Esophagus muscularis mucosa (tissue), 4 donors: ENCODE measurements at regions of chr1 and their contacts with region 1.

Region 1: DNA sequence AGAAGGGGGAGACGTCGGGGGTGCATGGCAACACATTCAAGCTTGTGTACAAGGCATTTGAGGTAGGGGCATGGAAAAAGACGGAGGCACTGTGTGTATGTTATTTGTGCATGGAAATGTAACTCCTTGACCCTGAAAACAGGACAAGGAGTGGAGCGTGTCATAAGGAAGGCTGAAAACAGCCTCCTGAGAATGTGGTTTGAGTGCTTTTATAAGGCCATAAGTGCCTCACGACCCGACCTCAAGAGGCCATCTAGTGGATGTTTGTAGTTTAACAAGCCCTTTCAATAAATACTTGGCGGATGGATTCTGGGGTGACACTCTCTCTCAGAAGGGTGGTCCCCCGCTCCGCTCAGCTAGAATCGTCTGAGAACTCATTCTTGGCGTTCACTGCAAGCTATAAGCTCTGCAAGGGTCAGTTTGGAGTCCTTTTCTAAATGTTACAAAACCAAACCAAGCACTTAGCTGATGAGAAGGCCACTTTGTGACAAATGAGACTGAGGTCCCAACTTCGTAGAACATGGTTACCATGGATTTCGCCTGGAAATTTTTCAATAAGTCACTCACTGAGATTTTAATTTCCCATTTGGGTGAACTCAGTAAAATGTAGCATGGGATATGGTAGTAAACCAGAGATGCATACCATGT is 38.8 kb upstream of the CLCA4 start:
- DNase-seq: no peak
- H3K4me3 ChIP-seq: no peak overlapping the region
- H3K27ac ChIP-seq: no peak overlapping the region
- H3K4me1 ChIP-seq: peaks cover 0 to 27% (median 23%) of the 10 kb centered on the region in 4 donors
- H3K27me3 ChIP-seq: no peaks in the 10 kb centered on the region
- CTCF ChIP-seq: peak; percentile 41 to 58 (median 44)
- EP300 ChIP-seq: no peak
- POLR2A ChIP-seq: no peak

Region 2: DNA sequence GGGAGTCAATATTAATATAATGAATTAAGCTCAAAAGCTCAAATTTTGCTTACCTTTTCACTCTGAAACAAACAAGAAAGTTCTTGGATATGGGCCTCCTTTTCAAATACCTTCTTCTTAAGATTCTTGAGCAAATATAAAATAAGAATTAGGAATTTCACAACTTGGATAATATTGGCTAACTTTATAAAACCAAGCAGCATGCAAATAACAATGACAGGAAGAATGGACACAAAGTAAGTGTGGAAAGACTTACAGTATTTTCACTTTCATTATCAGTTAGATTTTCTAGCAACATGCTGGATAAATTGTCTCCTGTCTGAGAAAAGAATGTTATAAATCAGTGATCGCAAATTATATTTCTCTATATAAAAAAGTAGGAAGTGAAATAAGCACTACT is 125.2 kb before region 1 on chr1:
- intact Hi-C with region 1: loop called (anchors 2 kb)
- DNase-seq: no peak
- H3K4me3 ChIP-seq: peak overlapping the region in 3 of 4 donors; percentile 1 to 22 (median 2)
- H3K27ac ChIP-seq: peak overlapping the region in 1 of 4 donors; percentile 9
- H3K4me1 ChIP-seq: peaks cover 0 to 2% (median 0%) of the 10 kb centered on the region in 4 donors
- H3K27me3 ChIP-seq: no peaks in the 10 kb centered on the region
- CTCF ChIP-seq: no peak
- EP300 ChIP-seq: no peak
- POLR2A ChIP-seq: no peak

Region 3: DNA sequence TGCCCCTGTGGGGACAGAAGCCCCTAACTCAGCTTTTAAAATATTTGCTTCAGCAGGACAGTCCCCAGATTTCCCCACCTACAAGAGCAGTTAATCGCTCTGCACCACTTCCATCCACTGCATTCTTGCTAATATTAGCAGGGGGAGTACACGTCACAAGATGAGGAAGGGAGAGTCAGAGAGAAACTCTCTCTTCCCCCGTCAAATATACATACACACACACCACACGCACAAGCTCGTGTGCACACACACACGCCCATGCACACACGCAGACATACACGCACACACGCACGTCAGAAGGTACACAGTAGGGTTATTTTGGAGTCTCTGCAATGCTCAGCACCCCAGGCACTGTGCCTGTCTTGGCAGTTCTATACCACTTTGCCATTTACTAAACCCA is 37.2 kb before region 1 on chr1:
- intact Hi-C with region 1: loop called (anchors 5 kb)
- DNase-seq: no peak
- H3K4me3 ChIP-seq: no peak overlapping the region
- H3K27ac ChIP-seq: no peak overlapping the region
- H3K4me1 ChIP-seq: no peaks in the 10 kb centered on the region
- H3K27me3 ChIP-seq: no peaks in the 10 kb centered on the region
- CTCF ChIP-seq: no peak
- EP300 ChIP-seq: no peak
- POLR2A ChIP-seq: no peak